ENCODE measurements at regions of chr5 and their contacts with region 1.

Region 1: GRCh38 chr5:76337953-76338451 is 65.1 kb upstream of the IQGAP2 start:
- DNase-seq: peak; percentile 74
- H3K4me3 ChIP-seq: no peak overlapping the region
- H3K27ac ChIP-seq: no peak overlapping the region
- H3K4me1 ChIP-seq: peaks cover 26% of the 10 kb centered on the region
- CTCF ChIP-seq: peak; percentile 81

Region 2: DNA sequence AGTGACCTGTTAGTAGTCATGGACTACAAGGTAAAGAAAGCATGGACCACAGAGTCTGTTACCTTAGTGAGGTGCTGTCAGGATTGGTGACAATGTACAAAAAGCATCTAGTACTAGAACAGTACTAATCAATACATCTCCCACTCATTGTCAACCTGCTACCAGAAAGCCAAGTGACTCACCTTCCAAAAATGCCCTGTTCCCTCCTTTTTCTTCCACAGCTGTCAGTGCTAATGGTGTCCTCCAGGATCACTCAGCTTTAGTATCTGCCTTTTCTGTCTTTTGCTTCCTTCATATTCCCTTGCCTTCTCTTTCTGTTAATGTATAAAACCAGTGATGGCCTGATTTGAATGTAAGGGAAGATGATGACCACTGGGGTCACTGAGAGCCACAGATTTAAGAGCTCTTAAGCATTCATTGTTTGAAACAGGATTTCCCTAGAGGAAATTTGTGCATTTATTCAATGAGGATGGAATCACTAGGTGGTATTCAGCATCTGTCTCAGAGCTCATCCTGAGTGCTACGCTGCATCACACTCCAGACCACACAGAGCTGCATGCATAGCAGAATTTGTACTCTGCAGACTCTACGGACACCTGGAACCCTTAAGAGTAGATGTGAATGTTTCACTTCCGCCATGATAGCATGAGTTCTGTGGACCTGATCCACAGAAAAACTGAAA is 183.9 kb before region 1 on chr5:
- CTCF ChIA-PET with region 1: no interaction called
- POLR2A ChIA-PET with region 1: no interaction called
- intact Hi-C with region 1: no loop called
- DNase-seq: no peak
- H3K4me3 ChIP-seq: no peak overlapping the region
- H3K27ac ChIP-seq: no peak overlapping the region
- H3K4me1 ChIP-seq: no peaks in the 10 kb centered on the region
- CTCF ChIP-seq: no peak

Region 3: DNA sequence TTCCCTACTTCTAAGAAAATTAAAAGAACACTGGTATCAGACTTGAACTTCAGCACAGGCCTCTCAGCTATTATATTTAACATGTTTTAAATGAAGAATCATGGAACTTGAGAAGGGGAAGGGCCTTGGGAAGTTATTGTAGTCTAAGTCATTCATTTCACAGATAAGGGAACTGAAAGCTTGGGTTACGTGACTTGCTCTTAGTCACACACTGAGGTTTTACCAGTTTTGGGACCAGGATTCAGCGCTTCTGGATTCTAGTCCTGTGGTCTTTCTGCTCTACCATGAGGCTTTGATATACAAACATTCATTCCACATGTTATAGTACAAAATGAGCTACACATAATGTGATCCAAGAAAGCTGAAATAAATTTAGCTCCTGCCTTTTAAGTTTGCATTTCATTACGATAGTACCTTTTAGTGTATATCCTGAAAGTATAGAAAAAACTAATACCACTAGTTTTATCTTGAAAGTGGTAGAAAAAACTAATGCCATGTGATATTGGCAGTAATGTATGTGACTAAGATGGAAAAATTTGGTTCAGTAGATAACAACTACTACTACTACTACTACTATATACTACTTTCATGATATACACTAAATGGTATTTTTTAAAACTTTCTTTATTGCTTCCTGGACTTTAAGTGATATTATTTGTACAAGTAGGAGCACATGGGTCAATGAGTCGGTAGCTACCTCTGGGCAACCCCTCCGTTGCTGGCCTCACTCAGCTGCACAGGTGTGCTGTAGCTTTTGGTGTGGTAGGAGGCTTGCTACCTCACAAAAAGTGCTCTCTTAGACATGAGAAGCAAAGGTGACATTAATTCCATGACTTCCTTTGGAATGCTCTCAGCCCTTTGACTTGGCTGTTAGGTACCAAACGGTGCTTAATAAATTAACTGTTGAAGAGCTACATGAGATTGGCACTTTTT is 244.5 kb after region 1 on chr5:
- CTCF ChIA-PET with region 1: no interaction called
- POLR2A ChIA-PET with region 1: interaction called, 3 read pairs
- intact Hi-C with region 1: loop called (anchors 2 kb)
- DNase-seq: peak; percentile 52
- H3K4me3 ChIP-seq: no peak overlapping the region
- H3K27ac ChIP-seq: peak overlapping the region; percentile 6
- H3K4me1 ChIP-seq: peaks cover 16% of the 10 kb centered on the region
- CTCF ChIP-seq: no peak

Region 4: DNA sequence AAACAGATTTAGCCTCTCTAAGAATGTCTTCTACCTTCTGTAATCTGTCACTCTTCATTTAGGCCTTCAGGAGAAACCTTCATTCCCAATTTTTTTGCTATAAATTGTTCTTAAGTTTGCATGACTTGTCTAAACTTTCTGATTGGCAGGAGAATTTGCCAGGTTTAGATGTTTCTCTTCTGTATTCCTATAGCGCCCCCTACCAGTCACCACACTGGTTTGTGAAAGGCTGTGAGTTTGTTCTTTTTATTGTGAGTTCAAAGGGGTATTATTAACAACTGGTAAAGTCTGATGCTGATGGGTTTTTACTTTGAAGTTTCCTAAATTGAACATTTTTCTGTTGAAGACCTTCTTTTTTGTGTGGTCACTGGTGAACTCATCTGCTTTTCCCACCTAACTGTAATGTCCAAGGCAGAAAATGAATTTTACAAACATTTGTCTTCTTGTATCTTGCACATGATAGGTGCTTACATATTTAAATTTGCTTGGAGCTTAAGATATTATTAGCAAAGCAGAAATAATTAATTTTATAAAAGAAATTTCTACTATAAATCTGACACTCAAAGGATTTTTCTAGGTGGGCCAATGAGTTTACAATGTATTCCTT is 303.6 kb after region 1 on chr5:
- CTCF ChIA-PET with region 1: no interaction called
- POLR2A ChIA-PET with region 1: no interaction called
- intact Hi-C with region 1: loop called (anchors 2 kb)
- DNase-seq: peak; percentile 76
- H3K4me3 ChIP-seq: no peak overlapping the region
- H3K27ac ChIP-seq: no peak overlapping the region
- H3K4me1 ChIP-seq: peaks cover 15% of the 10 kb centered on the region
- CTCF ChIP-seq: peak; percentile 99